Panc1 (cell line): ENCODE measurements at regions of chr22 and their contacts with region 1.

Region 1: GRCh38 chr22:38623351-38623750 is 32.8 kb downstream of the FAM227A start:
- DNase-seq: no peak
- ATAC-seq: no peak
- H3K4me3 ChIP-seq: no peak overlapping the region
- H3K27ac ChIP-seq: no peak overlapping the region
- H3K4me1 ChIP-seq: no peaks in the 10 kb centered on the region
- H3K27me3 ChIP-seq: no peaks in the 10 kb centered on the region
- CTCF ChIP-seq: no peak

Region 2: GRCh38 chr22:38981992-38982927 is 358.9 kb after region 1 on chr22 and contains the start of gene APOBEC3B:
- CTCF ChIA-PET with region 1: interaction called, 12 read pairs
- POLR2A ChIA-PET with region 1: no interaction called
- in situ Hi-C with region 1: no loop called
- intact Hi-C with region 1: no loop called
- DNase-seq: peak; percentile 47
- ATAC-seq: peak; percentile 95
- H3K4me3 ChIP-seq: peak within 1 kb of the TSS; percentile 21 to 48; a peak in 3 of 4 replicates
- H3K27ac ChIP-seq: peak within 1 kb of the TSS; percentile 74
- H3K4me1 ChIP-seq: peaks cover 4% of the 10 kb centered on the region; the same call in 1 of the 2 replicates
- H3K27me3 ChIP-seq: no peaks in the 10 kb centered on the region
- CTCF ChIP-seq: no peak
- total RNA-seq, gene APOBEC3B: 15.6 TPM